ENCODE measurements at regions of chr22 and their contacts with region 1.

Region 1: GRCh38 chr22:45179276-45180044 is 15.7 kb downstream of the NUP50 start:
- DNase-seq: no peak
- ATAC-seq: no peak

Region 2: DNA sequence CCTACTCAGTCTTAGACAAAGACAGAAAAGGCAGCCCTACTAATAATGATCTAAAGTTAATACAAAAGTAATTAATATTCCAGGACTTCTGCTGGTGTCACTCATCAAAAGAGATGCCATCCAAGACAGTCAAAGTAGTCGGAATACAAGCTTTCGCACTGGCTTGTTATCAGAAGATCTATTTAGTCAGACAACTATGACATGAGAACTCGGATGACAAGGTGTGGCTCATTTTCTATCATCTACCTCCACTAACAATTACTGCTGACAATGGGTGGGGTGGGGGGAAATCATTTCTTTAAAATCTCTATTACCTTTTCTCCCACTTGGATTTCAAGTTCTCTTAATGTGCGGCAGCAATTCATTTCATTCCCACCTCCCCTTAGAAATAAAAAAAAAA is 1424.0 kb before region 1 on chr22:
- intact Hi-C with region 1: loop called (anchors 5 kb)
- DNase-seq: no peak
- ATAC-seq: no peak

Region 3: GRCh38 chr22:45131749-45132148 is 47.7 kb before region 1 on chr22:
- intact Hi-C with region 1: no loop called
- DNase-seq: no peak
- ATAC-seq: peak; percentile 81